Posterior vena cava (tissue), 2 donors: ENCODE measurements at regions of chr1 and their contacts with region 1.

Region 1: GRCh38 chr1:243718893-243719292 is 131.2 kb downstream of the AKT3 start:
- DNase-seq: no peak

Region 2: DNA sequence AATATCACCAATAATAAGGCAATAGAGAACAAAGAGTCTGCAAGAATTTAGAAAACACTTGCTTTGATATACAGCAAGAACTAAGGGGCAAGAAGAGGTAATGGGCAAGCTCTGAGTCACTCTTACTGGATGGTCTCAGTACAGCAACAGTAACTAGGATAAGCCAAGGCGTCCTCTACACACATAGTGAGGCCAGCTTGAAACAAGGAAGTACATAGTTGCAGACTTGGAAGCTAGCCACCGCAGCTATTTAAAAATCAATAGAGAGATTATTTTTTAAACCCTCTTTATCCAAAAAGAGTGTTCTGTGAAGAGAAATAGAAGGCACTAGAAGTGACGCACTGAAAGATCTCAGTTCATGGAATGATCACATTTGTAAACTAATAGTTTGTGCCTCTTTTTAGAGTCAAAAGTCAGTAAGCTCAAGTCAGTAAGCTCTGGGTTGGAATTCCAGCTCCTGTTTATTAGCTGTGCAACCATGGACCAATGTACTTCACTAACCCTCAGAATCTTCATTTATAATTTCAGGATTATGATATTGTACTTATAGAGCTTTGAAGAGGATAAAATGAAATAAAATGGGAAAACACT is 12.5 kb after region 1 on chr1:
- intact Hi-C with region 1: no loop called
- DNase-seq: peak; percentile 60

Region 3: DNA sequence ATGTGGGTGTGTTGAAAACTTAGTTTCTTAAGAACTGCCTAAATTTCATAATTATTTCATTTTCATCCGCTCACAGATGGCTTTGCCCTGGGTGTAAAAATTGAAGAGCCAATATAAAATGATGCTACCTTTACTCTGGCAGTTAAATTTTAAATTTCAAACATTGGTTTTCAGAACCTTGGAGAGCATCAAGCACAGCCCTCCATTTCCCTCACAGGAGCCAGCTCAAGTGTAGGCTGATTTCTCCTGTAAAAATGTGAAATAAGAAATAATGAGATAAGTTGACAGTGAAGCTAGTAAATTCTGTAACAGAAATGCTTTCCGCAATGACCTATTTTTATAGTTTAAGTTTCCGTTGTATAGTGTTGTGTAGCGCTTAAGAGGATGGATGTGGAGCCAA is 185.0 kb after region 1 on chr1:
- intact Hi-C with region 1: loop called in 1 of 2 experiments (anchors 5 kb)
- DNase-seq: no peak